ENCODE measurements at regions of chr21 and their contacts with region 1.

Region 1: DNA sequence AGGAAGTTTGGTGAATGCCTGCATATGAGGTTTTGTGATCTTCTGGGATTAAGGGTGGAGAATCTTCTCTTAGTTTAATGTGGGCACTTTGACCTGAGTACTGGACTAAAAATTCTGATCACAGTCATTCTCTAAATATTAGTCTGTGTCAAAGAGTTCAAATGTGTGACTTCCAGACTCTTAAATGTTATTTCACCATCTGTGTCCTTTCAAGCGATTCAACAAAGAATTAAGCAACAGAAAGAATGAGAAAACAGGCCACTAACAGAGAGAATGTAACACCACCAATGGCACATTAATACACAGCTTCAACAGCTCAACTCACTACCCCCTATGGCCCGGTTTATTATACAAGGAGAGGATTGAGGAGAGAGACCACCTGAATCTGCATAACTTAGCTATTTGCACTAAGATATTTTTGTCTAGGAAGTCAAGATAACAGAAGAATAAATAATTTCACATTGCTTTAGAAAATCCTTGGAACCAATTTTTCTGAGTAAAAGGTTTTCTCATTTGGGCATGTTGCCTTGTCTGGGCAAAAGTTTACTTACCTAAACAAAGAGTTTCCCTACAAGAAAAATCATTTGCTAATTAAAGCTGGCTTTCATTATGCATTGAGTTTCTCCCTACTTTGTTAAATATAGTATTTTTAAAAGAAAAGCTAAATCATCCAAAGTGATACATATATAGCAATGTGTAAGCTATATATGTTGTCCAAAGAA is 1313.7 kb downstream of the NCAM2 start:
- DNase-seq: no peak

Region 2: GRCh38 chr21:22244229-22244915 is 67.5 kb before region 1 on chr21:
- intact Hi-C with region 1: loop called in 1 of 2 experiments (anchors 2 kb)
- DNase-seq: no peak

Region 3: DNA sequence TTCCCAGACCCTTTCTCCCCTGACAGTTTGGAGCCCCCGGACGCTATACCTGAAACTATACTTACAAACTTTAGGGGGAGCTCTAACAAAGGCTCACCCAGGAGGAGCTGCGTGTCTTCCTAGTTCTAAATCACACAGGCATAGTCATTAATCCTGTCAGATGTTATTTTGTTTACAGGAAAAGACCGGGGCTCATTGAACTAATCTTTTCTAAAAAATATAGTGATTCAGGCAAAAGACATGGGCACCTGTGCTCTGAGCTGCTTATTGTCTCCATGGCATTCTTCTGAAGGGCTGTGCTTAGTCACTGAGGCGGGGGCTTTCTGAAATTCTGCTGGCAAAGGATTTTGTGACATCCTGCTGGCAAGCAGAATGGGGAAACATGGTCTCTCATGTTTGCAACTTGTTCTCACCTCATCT is 263.3 kb after region 1 on chr21:
- intact Hi-C with region 1: no loop called
- DNase-seq: no peak